ENCODE measurements at regions of chr1 and their contacts with region 1.

Region 1: DNA sequence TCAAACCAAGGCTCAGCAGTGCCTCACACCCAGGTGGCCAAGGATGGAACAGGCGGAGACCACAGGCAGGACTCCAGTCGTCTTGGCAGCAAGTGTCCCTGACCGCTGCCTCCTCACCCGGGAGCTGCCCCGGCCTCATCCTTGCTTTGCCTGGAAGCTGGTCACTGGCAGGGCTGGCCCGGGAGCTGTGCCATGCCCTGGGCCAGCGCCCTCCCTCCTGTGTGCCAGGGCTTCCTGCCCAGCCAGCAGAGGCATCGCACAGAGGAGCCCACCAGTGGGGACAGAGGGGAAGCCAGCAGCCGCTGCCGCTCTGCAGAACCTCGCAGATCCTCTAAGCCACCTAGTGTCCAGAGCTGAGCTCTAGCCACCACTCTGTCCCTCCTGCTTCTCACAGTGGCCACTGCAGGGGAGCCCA is 7.8 kb downstream of the CASZ1 start:
- DNase-seq: no peak
- ATAC-seq: peak; percentile 94

Region 2: DNA sequence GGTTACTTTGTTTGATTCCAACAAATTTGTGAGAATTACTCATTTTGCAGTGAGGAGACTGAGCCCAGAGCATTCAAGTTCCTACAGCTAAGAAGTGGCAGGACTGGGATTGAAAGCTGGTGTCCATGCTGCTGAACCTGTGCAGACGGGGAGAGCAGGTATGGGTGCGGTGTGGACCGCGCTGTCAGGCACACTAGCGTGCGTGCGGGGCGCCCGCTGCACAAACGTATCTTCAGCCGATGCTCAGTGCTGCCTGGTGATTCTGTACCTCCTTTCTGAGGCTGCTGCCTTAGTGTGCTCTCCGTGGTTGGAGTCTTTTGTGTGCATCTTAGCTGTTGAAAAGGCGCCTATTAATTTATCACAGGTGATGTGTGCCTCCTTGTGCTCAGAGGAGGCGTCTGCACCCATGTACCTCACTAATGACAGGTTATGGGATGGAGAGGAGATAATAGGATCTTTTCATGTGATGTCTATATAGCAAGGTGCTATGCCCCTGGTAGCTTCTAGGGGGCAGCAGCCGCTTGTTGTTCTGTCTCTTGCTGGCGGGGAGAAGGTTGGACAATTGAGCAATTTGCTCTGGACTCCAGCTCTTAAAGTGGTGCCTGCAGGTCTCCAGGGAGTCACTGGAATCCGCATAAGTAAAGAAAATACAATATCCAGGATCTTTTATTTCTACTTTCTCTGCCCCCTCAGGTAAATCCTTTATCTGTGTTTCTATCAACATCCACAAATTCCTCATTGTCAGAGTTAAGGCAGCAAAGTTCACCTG is 281.3 kb before region 1 on chr1:
- intact Hi-C with region 1: loop called (anchors 5 kb)
- DNase-seq: peak; percentile 75
- ATAC-seq: peak; percentile 84

Region 3: GRCh38 chr1:10687782-10688408 is 100.7 kb before region 1 on chr1:
- intact Hi-C with region 1: loop called (anchors 2 kb)
- DNase-seq: no peak
- ATAC-seq: no peak

Region 4: DNA sequence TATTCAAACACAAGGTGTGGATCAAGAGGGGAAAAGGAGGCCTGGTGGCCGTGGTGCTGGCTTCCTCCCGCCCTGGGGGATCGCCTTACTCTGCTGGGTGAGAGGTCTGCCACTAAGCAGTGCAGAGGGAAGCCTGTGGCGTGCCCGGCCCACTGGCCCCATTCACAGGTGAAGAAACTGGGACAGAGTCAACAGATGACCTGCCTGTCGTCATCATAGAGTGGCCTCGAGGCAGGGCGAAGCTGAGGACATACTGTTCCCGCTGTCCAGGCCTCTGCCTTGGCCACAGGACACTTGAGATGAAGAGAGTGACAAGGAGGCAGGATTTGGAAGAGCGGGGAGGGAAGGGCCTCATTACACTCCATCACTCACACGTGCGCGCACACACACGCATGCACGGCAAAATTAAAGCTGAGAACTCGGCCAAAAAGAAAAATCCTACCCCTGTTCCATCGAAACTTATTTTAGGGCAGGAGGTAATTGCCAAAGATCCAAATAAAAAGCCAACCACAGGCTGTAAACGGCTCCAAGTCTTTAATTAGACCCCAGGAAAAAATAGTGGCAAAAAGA is 42.6 kb before region 1 on chr1:
- intact Hi-C with region 1: loop called (anchors 5 kb)
- DNase-seq: peak; percentile 77
- ATAC-seq: peak; percentile 79